ENCODE measurements at regions of chr14 and their contacts with region 1.

Region 1: GRCh38 chr14:35687335-35687939 is 121.7 kb downstream of the RALGAPA1 start:
- DNase-seq: peak; percentile 34
- H3K4me3 ChIP-seq: no peak overlapping the region
- CTCF ChIP-seq: peak; percentile 88

Region 2: DNA sequence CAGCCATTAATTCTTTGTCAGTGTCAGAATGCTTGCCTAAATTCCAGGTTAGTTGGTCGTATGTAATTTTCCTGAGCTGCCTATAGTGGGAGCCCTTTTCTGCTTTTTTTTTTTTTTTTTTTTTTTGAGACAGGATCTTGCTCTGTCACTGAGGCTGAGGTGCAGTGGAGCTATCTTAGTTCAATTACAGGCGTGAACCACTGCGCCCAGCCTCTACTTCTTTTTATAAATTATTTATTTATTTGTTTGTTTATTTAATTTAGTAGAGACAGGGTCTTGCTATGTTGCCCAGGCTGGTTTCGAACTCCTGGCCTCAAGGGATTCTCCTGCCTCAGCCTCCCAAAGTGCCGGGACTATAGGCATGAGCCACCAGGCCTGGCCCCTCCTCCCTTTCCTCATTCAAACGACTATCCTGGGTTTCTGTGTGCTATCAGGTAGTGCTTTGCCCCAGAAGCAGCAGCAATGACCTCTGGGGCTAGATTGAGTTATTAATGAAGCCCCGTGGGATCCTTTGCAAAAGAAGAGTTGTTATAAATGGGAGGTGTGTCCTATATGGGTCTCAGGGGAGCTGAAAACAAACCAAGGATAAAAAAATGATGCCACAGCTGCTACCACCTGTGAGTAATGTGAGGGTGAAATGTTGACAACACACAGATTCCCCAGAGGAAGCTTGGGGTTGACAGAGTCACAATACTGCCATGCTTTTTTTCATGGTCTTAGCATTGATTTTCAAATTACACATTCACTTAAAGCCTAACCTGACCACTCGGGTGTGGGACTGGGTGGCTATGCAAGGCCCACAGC is 248.3 kb before region 1 on chr14:
- in situ Hi-C with region 1: loop called (anchors 10 kb)
- DNase-seq: no peak
- H3K4me3 ChIP-seq: no peak overlapping the region
- CTCF ChIP-seq: peak; percentile 55

Region 3: DNA sequence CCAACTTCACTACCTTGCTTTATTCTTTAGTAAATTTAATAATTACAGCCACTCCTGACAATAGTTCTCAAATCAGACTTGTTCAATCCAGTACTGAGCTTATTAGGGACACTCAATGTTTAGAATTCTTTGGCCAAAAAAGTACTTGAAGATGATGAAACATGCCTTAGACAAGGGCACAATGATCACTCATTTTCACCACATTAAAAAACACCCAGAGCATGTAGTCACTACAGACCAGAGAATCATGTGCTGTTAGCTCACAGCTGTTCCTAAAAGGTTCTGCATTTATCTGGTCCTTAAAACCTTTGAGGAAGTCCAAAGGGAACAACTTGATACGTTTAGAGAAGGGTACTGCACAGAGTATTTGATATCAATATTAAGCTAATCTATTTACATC is 54.8 kb before region 1 on chr14:
- in situ Hi-C with region 1: no loop called
- DNase-seq: no peak
- H3K4me3 ChIP-seq: no peak overlapping the region
- CTCF ChIP-seq: no peak